Ascending aorta (tissue), 2 donors: ENCODE measurements at regions of chr19 and their contacts with region 1.

Region 1: DNA sequence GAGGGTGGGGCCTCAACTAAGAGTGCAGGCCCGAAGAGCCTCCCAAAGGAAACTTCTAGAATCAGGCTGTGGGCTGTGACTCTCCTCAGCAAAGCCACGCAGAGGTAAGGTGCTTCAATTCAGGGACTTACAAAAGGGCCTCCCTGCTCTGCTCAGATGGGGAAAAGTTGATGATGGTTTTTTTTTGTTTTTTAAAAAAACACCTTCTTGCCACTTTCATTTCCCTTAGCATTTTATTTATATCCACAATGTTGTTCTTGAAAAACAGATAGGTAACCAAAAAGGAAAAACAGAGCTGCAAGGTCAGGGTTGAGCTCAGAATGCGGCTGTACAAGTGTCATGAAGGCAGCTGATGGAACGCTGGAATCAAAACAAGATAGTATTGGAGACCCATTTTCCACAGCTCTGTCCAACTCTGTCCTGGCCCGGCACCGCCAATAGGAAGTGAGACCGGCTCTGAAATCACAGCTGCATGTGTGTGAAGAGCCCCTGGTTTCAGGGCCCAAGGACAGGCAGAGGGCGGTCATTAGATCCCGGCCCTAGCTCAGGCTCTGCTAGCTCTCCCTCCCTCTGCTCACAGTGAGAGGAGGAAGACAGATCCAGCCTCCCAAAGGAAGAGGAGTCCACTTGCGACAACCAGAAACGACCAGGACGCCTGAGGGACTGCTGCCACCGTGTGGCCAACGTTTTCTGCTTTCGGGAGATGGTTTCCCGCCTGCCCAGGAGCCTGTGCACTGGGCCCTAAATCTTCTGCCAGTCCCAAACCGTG is 58.3 kb downstream of the KLF2 start:
- DNase-seq: peak; percentile 46 to 92
- H3K4me3 ChIP-seq: peak overlapping the region; percentile 27 to 38
- H3K27ac ChIP-seq: peak overlapping the region; percentile 97
- H3K4me1 ChIP-seq: peaks cover 21 to 27% of the 10 kb centered on the region in 2 donors
- H3K27me3 ChIP-seq: no peaks in the 10 kb centered on the region
- CTCF ChIP-seq: peak; percentile 82 to 88 (median 86)

Region 2: DNA sequence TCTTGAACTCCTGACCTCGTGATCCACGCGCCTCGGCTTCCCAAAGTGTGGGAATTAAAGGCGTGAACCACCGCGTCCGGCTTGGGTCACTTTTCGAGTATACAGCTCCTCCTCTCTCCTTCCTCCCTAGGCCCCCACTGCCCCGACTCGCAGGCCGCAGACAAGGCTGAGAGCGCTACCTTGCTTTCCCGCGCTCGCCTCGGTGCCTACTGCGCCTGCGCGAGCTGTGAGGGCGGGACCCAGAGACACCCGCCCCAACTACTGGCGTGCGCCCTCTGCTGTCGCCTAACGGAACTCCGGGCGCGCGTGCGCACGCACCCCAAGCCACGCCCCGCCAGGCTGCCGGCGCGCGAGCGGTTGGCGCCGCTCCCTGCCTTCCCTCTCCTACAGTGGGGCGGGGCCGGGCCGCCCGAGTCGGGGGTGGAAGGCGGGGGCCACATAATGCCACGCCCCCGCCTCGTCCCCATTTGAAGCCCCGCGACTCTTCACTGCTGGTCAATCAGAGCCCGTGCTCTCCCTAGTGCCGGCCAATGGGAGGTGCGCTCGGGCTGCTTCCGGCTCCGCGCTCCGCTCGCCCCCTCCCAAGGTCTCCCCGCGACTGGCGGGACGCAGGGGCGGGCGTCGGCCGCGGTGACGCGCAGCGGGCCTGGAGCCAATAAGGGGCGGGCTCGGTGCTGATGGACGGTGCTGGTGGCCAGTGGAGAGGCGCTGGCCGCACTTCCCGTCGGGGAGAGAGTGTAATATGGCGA is 271.6 kb before region 1 on chr19 and contains the start of gene RAB8A:
- intact Hi-C with region 1: loop called (anchors 2 kb)
- DNase-seq: peak; percentile 98 to 99
- H3K4me3 ChIP-seq: peak within 1 kb of the TSS; percentile 96 to 97
- H3K27ac ChIP-seq: peak within 1 kb of the TSS; percentile 88 to 91
- H3K4me1 ChIP-seq: peaks cover 16 to 22% of the 10 kb centered on the region in 2 donors
- H3K27me3 ChIP-seq: no peaks in the 10 kb centered on the region
- CTCF ChIP-seq: peak; percentile 94 to 100 (median 94)
- total RNA-seq, gene RAB8A: 35.1 TPM

Region 3: GRCh38 chr19:16197622-16198369 is 185.2 kb before region 1 on chr19 and contains the start of gene AP1M1:
- intact Hi-C with region 1: loop called (anchors 5 kb)
- DNase-seq: peak; percentile 91 to 99
- H3K4me3 ChIP-seq: peak within 1 kb of the TSS; percentile 87 to 93
- H3K27ac ChIP-seq: peak within 1 kb of the TSS; percentile 84
- H3K4me1 ChIP-seq: peaks cover 3 to 25% of the 10 kb centered on the region in 2 donors
- H3K27me3 ChIP-seq: no peaks in the 10 kb centered on the region
- CTCF ChIP-seq: no peak
- total RNA-seq, gene AP1M1: 162 TPM

Region 4: DNA sequence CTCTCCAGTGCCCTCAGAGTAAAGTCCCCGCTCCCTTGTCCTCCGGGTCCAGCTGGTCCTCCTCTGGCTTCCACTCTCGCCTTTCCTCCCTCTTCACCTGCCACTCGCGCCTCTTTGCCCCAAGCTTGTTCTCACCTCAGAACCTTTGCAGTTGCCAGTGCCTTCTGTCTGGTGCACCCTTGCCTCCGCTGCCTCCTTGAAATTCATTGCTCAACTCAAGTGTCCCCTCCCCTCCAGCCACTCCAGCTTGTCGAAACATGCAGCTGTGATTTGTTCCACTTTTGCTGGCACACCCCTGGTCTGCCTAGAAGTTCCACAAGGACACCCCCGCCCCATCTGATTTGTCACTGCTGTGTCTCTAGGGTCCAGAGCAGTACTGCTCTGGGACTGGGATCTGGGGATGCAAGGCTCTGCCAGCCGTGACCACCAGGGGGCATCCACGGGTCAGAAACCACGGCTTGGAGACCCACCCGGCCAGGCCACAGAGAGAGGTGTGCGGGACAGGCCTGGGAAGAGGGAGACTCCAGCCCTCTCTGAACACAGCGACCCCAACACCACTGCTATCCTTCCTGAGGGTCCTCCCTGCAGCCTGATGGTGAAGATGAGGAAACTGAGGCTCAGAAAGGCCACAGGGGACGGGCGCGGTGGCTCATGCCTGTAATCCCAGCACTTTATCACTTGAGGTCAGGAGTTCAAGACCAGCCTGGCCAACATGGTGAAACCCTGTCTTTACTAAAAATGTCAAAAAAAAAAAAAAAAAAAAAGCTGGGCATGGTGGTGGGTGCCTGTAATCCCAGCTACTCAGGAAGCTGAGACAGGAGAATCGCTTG is 135.4 kb before region 1 on chr19:
- intact Hi-C with region 1: loop called (anchors 1 kb)
- DNase-seq: peak; percentile 43 to 93
- H3K4me3 ChIP-seq: no peak overlapping the region
- H3K27ac ChIP-seq: no peak overlapping the region
- H3K4me1 ChIP-seq: peaks cover 0 to 5% of the 10 kb centered on the region in 2 donors
- H3K27me3 ChIP-seq: no peaks in the 10 kb centered on the region
- CTCF ChIP-seq: peak; percentile 92 to 99 (median 95)

Region 5: GRCh38 chr19:16330368-16330801 is 52.6 kb before region 1 on chr19:
- intact Hi-C with region 1: loop called (anchors 2 kb)
- DNase-seq: peak; percentile 86 to 94
- H3K4me3 ChIP-seq: no peak overlapping the region
- H3K27ac ChIP-seq: peak overlapping the region; percentile 86 to 96
- H3K4me1 ChIP-seq: peaks cover 5 to 32% of the 10 kb centered on the region in 2 donors
- H3K27me3 ChIP-seq: no peaks in the 10 kb centered on the region
- CTCF ChIP-seq: no peak

Region 6: DNA sequence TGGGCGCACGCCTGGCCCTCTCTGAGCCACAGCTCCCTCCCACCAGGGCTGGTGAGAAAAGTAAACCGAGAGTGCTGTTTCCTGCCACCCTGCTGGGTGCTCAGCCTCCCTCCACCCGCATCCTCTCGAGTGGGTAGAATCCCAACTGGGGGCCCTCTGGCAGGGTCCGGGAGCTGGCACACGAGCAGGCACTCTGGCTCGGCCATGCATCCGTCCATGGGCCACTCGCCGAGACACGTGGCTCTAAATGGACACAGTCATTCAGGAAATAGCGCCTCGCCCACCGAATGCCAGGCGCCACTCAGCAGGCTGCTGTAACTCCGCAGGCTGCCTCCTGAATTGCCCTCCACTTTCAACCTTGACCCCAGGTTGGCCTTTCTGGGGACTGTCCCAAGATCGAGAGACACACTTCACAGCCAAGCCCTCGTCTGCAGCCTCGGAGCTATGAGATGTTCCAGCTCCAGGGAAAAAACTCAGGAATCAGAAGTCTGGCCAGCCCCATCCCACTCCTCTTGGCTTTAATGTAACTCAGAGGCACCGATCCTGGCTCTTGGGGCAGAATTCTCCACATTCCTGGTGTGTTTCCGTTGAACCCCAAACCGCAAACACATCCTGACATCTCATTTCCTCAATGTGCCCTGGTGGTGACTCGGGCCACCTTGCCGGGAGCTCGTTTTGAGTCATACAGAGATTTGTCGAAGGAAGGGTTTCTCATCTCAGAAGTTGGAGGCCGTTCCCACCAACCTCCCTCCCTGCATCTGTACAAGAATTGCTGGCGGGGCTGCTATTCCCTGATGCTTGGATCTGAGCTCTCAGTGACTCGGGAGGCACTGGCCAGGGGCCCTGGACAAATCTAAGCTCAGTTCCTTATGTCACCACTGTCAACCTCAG is 44.2 kb before region 1 on chr19:
- intact Hi-C with region 1: loop called (anchors 2 kb)
- DNase-seq: peak; percentile 46 to 89
- H3K4me3 ChIP-seq: peak overlapping the region in 1 of 2 donors; percentile 15
- H3K27ac ChIP-seq: peak overlapping the region; percentile 69 to 83
- H3K4me1 ChIP-seq: peaks cover 14 to 25% of the 10 kb centered on the region in 2 donors
- H3K27me3 ChIP-seq: no peaks in the 10 kb centered on the region
- CTCF ChIP-seq: peak; percentile 17 to 54 (median 20)